Natural killer cell (primary cell): ENCODE measurements at regions of chr3 and their contacts with region 1.

Region 1: GRCh38 chr3:128763967-128764366 is 38.0 kb downstream of the RAB7A start:
- DNase-seq: peak; percentile 41 to 53
- ATAC-seq: peak; percentile 77 to 83 (median 78)
- H3K4me3 ChIP-seq: no peak overlapping the region
- H3K4me3 Mint-ChIP-seq: peak overlapping the region; percentile 56
- H3K27ac ChIP-seq: peak overlapping the region; percentile 48
- H3K27ac Mint-ChIP-seq: peak overlapping the region; percentile 73 to 85
- H3K4me1 ChIP-seq: peaks cover 70% of the 10 kb centered on the region
- H3K4me1 Mint-ChIP-seq: peaks cover 88 to 92% of the 10 kb centered on the region in 2 donors
- H3K27me3 ChIP-seq: no peaks in the 10 kb centered on the region
- H3K27me3 Mint-ChIP-seq: no peaks in the 10 kb centered on the region
- CTCF ChIP-seq: no peak

Region 2: DNA sequence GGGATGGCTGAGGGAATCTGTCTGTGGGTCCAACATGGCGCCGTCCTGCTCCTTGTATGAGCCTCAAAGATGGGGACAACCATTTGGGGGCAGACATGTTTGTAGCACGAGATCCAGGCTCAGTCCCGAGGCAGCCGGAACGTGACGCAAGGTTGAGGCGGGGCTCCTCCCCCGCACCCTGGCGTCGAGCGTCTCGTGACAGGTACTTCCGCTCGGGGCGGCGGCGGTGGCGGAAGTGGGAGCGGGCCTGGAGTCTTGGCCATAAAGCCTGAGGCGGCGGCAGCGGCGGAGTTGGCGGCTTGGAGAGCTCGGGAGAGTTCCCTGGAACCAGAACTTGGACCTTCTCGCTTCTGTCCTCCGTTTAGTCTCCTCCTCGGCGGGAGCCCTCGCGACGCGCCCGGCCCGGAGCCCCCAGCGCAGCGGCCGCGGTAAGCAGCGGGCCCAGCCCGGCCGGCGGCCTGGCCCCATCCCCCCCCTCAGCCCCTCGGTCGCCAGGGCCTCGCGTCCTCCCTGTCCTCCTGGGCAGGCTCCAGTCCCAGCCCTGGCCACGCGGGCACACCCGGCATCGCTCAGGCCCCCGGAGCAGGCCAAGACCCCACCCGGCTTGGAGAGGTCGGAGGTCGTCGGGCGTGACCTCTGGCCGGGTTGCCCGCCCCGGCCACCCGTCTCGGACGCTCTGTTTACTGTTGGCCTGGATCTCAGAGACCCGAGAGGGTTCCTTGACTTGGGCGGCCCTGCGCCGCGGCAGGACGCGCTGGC is 37.9 kb before region 1 on chr3 and contains the start of gene RAB7A:
- intact Hi-C with region 1: loop called (anchors 2 kb)
- DNase-seq: peak; percentile 96 to 99
- ATAC-seq: peak; percentile 90 to 97 (median 95)
- H3K4me3 ChIP-seq: peak within 1 kb of the TSS; percentile 83
- H3K4me3 Mint-ChIP-seq: peak within 1 kb of the TSS; percentile 99
- H3K27ac ChIP-seq: peak within 1 kb of the TSS; percentile 75
- H3K27ac Mint-ChIP-seq: peak within 1 kb of the TSS; percentile 95 to 98
- H3K4me1 ChIP-seq: peaks cover 26% of the 10 kb centered on the region
- H3K4me1 Mint-ChIP-seq: peaks cover 53 to 58% of the 10 kb centered on the region in 2 donors
- H3K27me3 ChIP-seq: no peaks in the 10 kb centered on the region
- H3K27me3 Mint-ChIP-seq: peaks cover 2 to 8% of the 10 kb centered on the region in 2 donors
- CTCF ChIP-seq: no peak
- total RNA-seq, gene RAB7A: 218 to 233 (median 224) TPM

Region 3: GRCh38 chr3:128734523-128735189 is 29.3 kb before region 1 on chr3:
- intact Hi-C with region 1: loop called (anchors 2 kb)
- DNase-seq: no peak
- ATAC-seq: peak in 2 of 3 donors; percentile 14 to 33
- H3K4me3 ChIP-seq: no peak overlapping the region
- H3K4me3 Mint-ChIP-seq: peak overlapping the region; percentile 70
- H3K27ac ChIP-seq: no peak overlapping the region
- H3K27ac Mint-ChIP-seq: peak overlapping the region; percentile 66 to 77
- H3K4me1 ChIP-seq: peaks cover 28% of the 10 kb centered on the region
- H3K4me1 Mint-ChIP-seq: peaks cover 73 to 81% of the 10 kb centered on the region in 2 donors
- H3K27me3 ChIP-seq: no peaks in the 10 kb centered on the region
- H3K27me3 Mint-ChIP-seq: no peaks in the 10 kb centered on the region
- CTCF ChIP-seq: no peak

Region 4: GRCh38 chr3:128787256-128788240 is 23.6 kb after region 1 on chr3:
- intact Hi-C with region 1: loop called (anchors 2 kb)
- DNase-seq: peak in 1 of 2 donors; percentile 71
- ATAC-seq: peak; percentile 72 to 79 (median 79)
- H3K4me3 ChIP-seq: no peak overlapping the region
- H3K4me3 Mint-ChIP-seq: peak overlapping the region; percentile 81
- H3K27ac ChIP-seq: peak overlapping the region; percentile 72
- H3K27ac Mint-ChIP-seq: peak overlapping the region; percentile 80 to 83
- H3K4me1 ChIP-seq: peaks cover 33% of the 10 kb centered on the region
- H3K4me1 Mint-ChIP-seq: peaks cover 65 to 81% of the 10 kb centered on the region in 2 donors
- H3K27me3 ChIP-seq: no peaks in the 10 kb centered on the region
- H3K27me3 Mint-ChIP-seq: no peaks in the 10 kb centered on the region
- CTCF ChIP-seq: peak; percentile 28

Region 5: GRCh38 chr3:128794770-128795649 is 31.0 kb after region 1 on chr3:
- intact Hi-C with region 1: loop called (anchors 5 kb)
- DNase-seq: peak; percentile 47 to 87
- ATAC-seq: peak; percentile 98 to 100 (median 99)
- H3K4me3 ChIP-seq: no peak overlapping the region
- H3K4me3 Mint-ChIP-seq: no peak overlapping the region
- H3K27ac ChIP-seq: no peak overlapping the region
- H3K27ac Mint-ChIP-seq: peak overlapping the region; percentile 61 to 72
- H3K4me1 ChIP-seq: peaks cover 18% of the 10 kb centered on the region
- H3K4me1 Mint-ChIP-seq: peaks cover 22 to 45% of the 10 kb centered on the region in 2 donors
- H3K27me3 ChIP-seq: no peaks in the 10 kb centered on the region
- H3K27me3 Mint-ChIP-seq: no peaks in the 10 kb centered on the region
- CTCF ChIP-seq: peak; percentile 74

Region 6: DNA sequence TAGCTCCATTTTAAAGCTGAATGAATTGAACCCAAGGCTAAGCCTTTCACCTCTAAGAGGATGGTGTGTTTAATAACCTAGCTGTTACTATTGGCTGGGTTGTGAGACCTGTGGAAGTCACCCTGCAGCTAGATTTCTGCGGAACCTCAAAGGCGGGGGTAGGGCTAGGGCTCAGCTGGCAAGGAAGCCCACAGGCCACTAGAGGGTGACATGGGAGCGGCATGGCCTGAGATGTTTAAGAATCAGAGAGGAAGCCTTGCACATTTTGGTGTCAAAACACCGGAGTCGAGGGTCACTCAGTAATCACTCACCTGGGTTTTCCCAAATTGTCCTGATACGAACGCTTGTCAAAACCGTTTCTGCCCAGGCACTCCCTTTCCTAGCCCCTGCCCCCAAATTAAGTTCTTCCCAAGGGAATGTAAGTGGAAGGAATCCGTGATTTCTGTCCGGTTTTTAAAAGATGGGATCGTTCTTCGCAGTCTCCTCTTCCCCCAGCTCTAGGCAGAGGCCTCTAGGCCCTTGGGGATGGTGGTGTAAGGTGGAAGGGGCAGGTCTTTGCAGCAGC is 111.7 kb after region 1 on chr3:
- intact Hi-C with region 1: no loop called
- DNase-seq: peak in 1 of 2 donors; percentile 82
- ATAC-seq: peak in 2 of 3 donors; percentile 32 to 39
- H3K4me3 ChIP-seq: no peak overlapping the region
- H3K4me3 Mint-ChIP-seq: no peak overlapping the region
- H3K27ac ChIP-seq: no peak overlapping the region
- H3K27ac Mint-ChIP-seq: no peak overlapping the region
- H3K4me1 ChIP-seq: peaks cover 25% of the 10 kb centered on the region
- H3K4me1 Mint-ChIP-seq: peaks cover 32 to 37% of the 10 kb centered on the region in 2 donors
- H3K27me3 ChIP-seq: no peaks in the 10 kb centered on the region
- H3K27me3 Mint-ChIP-seq: peaks cover 12 to 16% of the 10 kb centered on the region in 2 donors
- CTCF ChIP-seq: peak; percentile 29